Activated CD4-positive, alpha-beta T cell treated with anti-CD3 and anti-CD28 coated beads, Interleukin-2, amount 10 ng/mL, durations not matched to agents 24 days and 14 days (primary cell): ENCODE measurements at regions of chr1 and their contacts with region 1.

Region 1: GRCh38 chr1:41919764-41920397 is 1.2 kb upstream of the HIVEP3 start:
- DNase-seq: peak; percentile 95
- H3K4me3 Mint-ChIP-seq: peak overlapping the region; percentile 95
- H3K27ac Mint-ChIP-seq: peak overlapping the region; percentile 96
- H3K4me1 Mint-ChIP-seq: peaks cover 51% of the 10 kb centered on the region
- H3K27me3 Mint-ChIP-seq: peaks cover 5% of the 10 kb centered on the region

Region 2: GRCh38 chr1:41898191-41898713 is 21.6 kb before region 1 on chr1:
- intact Hi-C with region 1: loop called (anchors 2 kb)
- DNase-seq: peak; percentile 95
- H3K4me3 Mint-ChIP-seq: peak overlapping the region; percentile 68
- H3K27ac Mint-ChIP-seq: peak overlapping the region; percentile 89
- H3K4me1 Mint-ChIP-seq: peaks cover 77% of the 10 kb centered on the region
- H3K27me3 Mint-ChIP-seq: no peaks in the 10 kb centered on the region

Region 3: DNA sequence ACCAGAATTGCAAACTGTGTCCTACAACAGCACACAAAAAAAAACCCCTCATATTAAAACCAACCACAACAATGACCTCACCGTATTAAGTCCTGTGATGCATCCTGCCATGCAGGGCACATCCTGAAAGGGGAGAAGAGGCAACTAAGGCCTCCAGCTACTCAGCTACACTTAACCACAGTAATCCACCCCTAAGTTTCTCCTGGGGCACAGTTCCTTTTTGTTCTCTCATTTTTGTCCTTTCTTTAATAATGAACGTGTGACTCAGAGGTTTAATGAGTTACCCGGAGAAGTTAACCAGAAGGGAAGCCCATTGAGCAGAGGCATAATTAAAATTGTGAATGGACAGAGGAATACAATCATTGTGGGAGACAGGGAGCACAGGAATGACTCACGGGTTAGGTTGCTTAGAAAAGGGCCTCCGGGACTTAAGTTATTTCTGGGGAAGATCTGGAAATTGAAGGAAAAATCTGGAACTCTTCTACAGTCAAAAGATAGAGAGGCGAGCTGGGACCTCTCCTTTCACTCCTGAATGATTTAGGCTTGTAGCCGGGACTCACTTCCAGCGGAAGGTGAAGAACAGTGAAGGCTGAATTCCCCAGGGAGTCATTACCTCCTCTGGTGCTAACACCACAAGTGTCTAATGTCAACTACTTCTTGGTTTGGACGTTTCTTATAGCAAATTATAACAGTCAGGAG is 35.7 kb after region 1 on chr1:
- intact Hi-C with region 1: loop called (anchors 5 kb)
- DNase-seq: no peak
- H3K4me3 Mint-ChIP-seq: no peak overlapping the region
- H3K27ac Mint-ChIP-seq: no peak overlapping the region
- H3K4me1 Mint-ChIP-seq: peaks cover 15% of the 10 kb centered on the region
- H3K27me3 Mint-ChIP-seq: no peaks in the 10 kb centered on the region

Region 4: GRCh38 chr1:42035830-42036604 is 116.1 kb after region 1 on chr1:
- intact Hi-C with region 1: loop called (anchors 2 kb)
- DNase-seq: peak; percentile 99
- H3K4me3 Mint-ChIP-seq: peak overlapping the region; percentile 82
- H3K27ac Mint-ChIP-seq: peak overlapping the region; percentile 31
- H3K4me1 Mint-ChIP-seq: peaks cover 27% of the 10 kb centered on the region
- H3K27me3 Mint-ChIP-seq: peaks cover 10% of the 10 kb centered on the region